HEK293 (cell line): ENCODE measurements at regions of chr18 and their contacts with region 1.

Region 1: DNA sequence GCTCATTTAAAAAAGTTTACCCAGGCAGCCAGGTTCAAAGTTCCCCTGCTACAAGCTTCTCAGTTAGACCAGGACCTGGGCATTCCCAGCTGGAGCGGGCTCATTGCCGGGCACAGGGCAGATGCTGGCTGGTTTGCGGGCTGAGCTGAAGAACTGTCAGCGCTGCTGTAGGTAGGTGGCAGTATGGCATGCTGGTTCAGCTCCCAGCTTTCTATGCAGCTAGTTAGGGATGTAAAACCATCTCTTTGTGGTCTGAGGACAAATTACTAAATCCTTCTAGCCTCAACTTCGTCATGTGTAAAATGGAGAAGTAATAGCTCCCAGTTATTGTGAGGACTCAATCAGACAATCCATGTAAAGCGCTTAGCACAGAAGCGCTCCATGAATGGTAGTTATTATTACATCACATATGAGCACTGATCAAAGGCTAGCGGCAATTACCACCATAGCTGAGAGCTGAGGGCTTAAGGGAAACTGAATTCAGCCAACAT is 2.4 kb upstream of the LDLRAD4 start:
- H3K4me3 ChIP-seq: no peak overlapping the region
- H3K27ac ChIP-seq: no peak overlapping the region
- H3K4me1 ChIP-seq: peaks cover 28% of the 10 kb centered on the region
- CTCF ChIP-seq: peak; percentile 70

Region 2: DNA sequence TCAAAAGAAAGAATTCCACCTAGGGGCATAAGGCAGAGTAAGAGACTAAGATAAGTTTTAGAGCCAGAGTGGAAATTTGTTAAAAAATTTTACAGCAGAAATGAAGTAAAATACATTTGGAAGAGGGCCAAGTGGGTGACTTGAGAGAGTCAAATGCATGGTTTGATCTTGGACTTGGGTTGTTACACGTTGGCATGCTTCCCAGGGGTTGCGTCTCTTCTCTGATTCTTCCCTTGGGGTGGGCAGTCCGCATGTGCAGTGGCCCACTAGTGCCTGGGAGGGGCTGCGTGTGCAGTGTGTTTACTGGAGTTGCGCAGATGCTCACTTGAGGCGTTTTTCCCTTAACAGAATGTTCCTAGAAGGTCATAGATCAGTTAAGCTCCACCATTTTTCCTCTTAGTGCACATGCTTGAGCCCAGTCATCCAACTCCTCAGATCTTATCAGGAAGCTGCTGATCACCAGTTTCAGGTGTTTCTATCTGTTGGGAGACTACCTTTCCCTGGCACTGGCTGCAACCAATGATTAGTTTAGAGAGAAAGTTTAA is 255.2 kb before region 1 on chr18:
- CTCF ChIA-PET with region 1: no interaction called
- POLR2A ChIA-PET with region 1: no interaction called
- H3K4me3 ChIP-seq: no peak overlapping the region
- H3K27ac ChIP-seq: peak overlapping the region; percentile 17; the same call in 1 of the 2 replicates
- H3K4me1 ChIP-seq: peaks cover 16% of the 10 kb centered on the region
- CTCF ChIP-seq: no peak

Region 3: GRCh38 chr18:13199169-13199568 is 17.0 kb before region 1 on chr18:
- CTCF ChIA-PET with region 1: interaction called, 11 read pairs
- POLR2A ChIA-PET with region 1: no interaction called
- H3K4me3 ChIP-seq: no peak overlapping the region
- H3K27ac ChIP-seq: no peak overlapping the region
- H3K4me1 ChIP-seq: no peaks in the 10 kb centered on the region
- CTCF ChIP-seq: no peak

Region 4: DNA sequence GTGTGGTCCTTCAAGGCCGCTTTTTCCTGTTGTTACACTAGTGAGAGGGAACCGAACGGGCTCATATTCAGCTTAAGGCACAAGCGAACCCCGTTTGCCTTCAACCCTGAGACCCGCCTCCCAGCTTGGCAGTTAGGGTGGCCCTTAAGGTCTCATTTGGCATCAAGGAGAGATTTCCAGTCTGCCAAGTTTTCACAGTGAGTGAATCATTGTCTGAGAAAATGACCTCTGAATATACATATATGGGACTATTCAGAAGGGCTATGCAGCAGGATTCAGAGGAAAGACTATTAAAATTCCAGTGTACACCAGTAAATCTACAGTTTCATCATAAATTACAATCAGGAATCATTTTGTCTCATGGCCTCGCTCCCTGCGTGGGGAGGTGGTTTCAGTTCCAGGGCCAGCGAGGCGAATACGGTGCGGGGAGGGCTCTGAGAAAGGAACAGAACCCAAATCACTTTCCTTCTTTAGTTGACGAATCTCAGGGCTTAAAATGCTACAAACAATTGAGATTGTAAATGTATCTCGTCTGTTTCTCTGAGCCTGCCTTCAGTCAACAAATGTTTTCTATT is 278.8 kb after region 1 on chr18:
- CTCF ChIA-PET with region 1: no interaction called
- POLR2A ChIA-PET with region 1: no interaction called
- H3K4me3 ChIP-seq: no peak overlapping the region
- H3K27ac ChIP-seq: no peak overlapping the region
- H3K4me1 ChIP-seq: no peaks in the 10 kb centered on the region; the same call in 1 of the 2 replicates
- CTCF ChIP-seq: no peak

Region 5: DNA sequence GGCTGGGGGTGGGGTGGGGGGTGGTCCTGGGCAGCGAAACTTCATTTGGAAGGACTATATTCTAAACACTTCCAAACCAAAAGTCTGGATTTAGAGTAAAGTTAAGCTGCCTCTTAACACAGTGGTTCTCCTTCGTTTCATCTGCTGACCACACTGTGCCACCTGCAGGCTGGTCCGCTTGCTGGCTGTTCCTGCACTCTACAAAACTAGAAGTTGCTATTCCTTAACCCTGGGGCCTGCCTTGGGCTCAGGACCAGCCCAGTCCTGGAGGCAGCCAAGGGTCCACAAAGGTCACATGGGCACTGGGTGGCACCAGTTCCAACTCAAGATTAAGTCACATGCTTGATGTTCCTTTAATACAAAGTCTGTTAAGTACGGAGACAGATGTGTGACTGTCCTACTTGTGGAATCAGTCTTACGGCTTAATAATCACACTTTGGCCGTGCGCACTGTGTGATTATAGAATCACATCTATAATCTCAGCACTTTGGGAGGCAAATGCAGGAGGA is 314.8 kb after region 1 on chr18:
- CTCF ChIA-PET with region 1: interaction called, 15 read pairs
- POLR2A ChIA-PET with region 1: no interaction called
- H3K4me3 ChIP-seq: no peak overlapping the region
- H3K27ac ChIP-seq: no peak overlapping the region
- H3K4me1 ChIP-seq: 0 out of 2 replicates have a peak, but pooled peaks cover 2% of the 10 kb centered on the region
- CTCF ChIP-seq: peak; percentile 50; the same call in 1 of the 2 replicates

Region 6: DNA sequence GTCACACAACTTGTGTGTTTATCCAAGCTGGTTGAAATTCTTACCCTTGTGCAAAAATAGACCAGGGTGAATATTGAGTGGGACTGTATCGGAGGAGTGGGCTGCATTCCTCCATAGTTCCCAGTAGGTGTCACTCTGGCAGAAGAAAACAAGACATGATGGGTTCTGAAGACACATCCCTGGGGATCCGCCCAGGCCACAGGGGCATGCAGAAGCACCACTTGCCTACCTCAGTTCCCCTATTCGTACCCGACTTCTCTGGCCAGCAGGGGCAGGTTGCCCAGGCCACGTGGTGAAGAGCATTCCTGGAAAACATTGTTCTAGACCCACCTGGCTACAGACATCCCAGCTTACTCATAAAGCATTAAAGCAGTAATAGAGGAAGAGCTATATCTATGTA is 342.0 kb after region 1 on chr18:
- CTCF ChIA-PET with region 1: interaction called, 10 read pairs
- POLR2A ChIA-PET with region 1: no interaction called
- H3K4me3 ChIP-seq: no peak overlapping the region
- H3K27ac ChIP-seq: no peak overlapping the region
- H3K4me1 ChIP-seq: no peaks in the 10 kb centered on the region; the same call in 1 of the 2 replicates
- CTCF ChIP-seq: peak; percentile 35